MCF 10A (cell line): ENCODE measurements at regions of chr3 and their contacts with region 1.

Region 1: DNA sequence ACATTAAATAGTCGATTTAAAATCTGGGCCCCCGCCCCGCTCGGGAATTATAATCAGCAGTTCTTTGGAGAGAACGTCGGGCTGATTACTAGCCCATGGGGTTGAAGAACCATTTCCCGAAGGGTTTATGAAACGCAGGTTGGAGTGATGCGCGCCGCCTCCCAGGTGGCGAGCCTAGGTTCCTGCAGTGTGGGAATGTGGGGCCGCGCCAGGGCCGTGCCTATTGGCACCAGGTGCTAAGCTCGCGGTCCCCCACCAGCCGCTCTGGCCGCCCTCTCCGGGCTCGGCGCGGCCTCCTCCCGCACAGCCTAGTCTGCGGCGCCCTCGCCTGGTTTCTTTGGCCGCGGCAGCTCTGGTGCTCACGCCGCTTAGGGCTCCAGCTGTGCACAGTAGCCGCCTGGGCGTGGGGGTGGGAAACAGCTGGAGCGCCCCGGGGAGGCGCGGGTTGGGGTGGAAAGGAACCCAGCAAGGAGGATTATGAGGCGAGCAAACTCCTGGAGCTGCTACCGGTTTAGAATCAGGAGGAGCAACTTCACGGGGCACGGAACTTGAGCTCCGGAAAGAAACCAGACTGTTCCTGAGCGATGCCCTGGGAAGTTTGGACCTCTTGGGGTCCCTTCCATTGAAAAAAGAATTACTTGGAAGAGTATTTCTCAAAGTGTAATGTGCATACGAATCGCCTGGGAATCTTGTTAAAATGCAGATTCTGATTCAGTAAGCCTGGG is 5.6 kb upstream of the MECOM start:
- DNase-seq: peak; percentile 72
- H3K4me3 Mint-ChIP-seq: peak overlapping the region; percentile 75
- H3K27ac Mint-ChIP-seq: no peak overlapping the region
- H3K4me1 Mint-ChIP-seq: no peaks in the 10 kb centered on the region
- H3K27me3 Mint-ChIP-seq: peaks cover 29% of the 10 kb centered on the region
- CTCF ChIP-seq: peak; percentile 87

Region 2: GRCh38 chr3:168865022-168865551 is 804.0 kb before region 1 on chr3:
- CTCF ChIA-PET with region 1: interaction called, 6 read pairs
- POLR2A ChIA-PET with region 1: no interaction called
- intact Hi-C with region 1: loop called (anchors 1 kb)
- DNase-seq: peak; percentile 41
- H3K4me3 Mint-ChIP-seq: no peak overlapping the region
- H3K27ac Mint-ChIP-seq: no peak overlapping the region
- H3K4me1 Mint-ChIP-seq: no peaks in the 10 kb centered on the region
- H3K27me3 Mint-ChIP-seq: peaks cover 59% of the 10 kb centered on the region
- CTCF ChIP-seq: peak; percentile 65

Region 3: GRCh38 chr3:169041677-169042171 is 627.4 kb before region 1 on chr3:
- CTCF ChIA-PET with region 1: interaction called, 8 read pairs
- POLR2A ChIA-PET with region 1: no interaction called
- intact Hi-C with region 1: loop called (anchors 1 kb)
- DNase-seq: peak; percentile 46
- H3K4me3 Mint-ChIP-seq: no peak overlapping the region
- H3K27ac Mint-ChIP-seq: peak overlapping the region; percentile 7
- H3K4me1 Mint-ChIP-seq: no peaks in the 10 kb centered on the region
- H3K27me3 Mint-ChIP-seq: no peaks in the 10 kb centered on the region
- CTCF ChIP-seq: peak; percentile 42

Region 4: DNA sequence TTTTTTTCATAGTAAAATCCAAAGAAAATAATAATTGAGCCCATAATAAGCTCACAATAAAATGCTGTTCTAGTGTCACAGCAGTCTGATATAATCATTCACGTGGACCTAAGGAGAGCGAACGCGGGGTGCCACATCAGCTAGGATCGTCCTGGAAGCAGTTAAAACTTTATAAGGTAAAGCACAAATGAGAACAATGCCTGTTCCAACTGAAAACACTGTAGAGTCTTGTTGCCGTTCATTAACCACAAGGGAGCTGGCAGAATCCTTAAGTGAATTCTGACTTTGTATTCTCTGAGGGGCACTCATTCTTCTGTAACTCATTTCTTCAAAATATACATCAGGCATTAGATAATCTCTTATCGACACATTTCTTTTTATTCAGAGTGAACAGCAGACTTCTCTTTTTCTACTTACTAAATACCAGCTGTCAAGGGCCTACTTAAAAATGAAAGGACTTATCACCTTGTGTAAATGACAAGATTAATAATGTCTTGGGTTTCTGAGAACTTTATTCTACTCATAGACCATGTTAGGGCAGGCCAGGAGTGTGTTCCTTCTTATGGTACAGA is 530.2 kb before region 1 on chr3:
- CTCF ChIA-PET with region 1: interaction called, 56 read pairs
- POLR2A ChIA-PET with region 1: no interaction called
- intact Hi-C with region 1: no loop called
- DNase-seq: no peak
- H3K4me3 Mint-ChIP-seq: no peak overlapping the region
- H3K27ac Mint-ChIP-seq: no peak overlapping the region
- H3K4me1 Mint-ChIP-seq: peaks cover 6% of the 10 kb centered on the region
- H3K27me3 Mint-ChIP-seq: no peaks in the 10 kb centered on the region
- CTCF ChIP-seq: no peak

Region 5: DNA sequence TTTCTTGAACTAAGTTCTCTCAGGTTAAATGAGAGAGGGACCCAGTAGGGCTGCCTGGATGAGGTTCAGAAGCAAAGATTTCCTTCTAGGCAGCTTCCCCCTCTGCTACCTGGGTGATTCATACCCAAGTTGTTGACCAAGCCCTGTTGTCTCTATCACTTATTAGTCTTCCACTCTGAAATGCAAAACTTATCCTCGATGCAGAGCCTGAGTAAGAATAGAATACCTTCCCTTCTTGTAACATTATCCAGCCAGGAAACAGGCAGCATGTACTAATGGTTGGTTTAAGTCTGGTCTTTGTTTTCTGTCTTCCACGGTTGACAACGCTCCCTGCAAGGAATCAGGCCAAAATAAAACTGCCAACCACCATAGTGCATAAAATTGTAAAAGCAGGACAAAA is 382.9 kb before region 1 on chr3:
- CTCF ChIA-PET with region 1: interaction called, 11 read pairs
- POLR2A ChIA-PET with region 1: no interaction called
- intact Hi-C with region 1: no loop called
- DNase-seq: no peak
- H3K4me3 Mint-ChIP-seq: no peak overlapping the region
- H3K27ac Mint-ChIP-seq: no peak overlapping the region
- H3K4me1 Mint-ChIP-seq: no peaks in the 10 kb centered on the region
- H3K27me3 Mint-ChIP-seq: no peaks in the 10 kb centered on the region
- CTCF ChIP-seq: no peak

Region 6: GRCh38 chr3:169390271-169391230 is 278.6 kb before region 1 on chr3:
- CTCF ChIA-PET with region 1: interaction called, 15 read pairs
- POLR2A ChIA-PET with region 1: no interaction called
- intact Hi-C with region 1: no loop called
- DNase-seq: peak; percentile 21
- H3K4me3 Mint-ChIP-seq: no peak overlapping the region
- H3K27ac Mint-ChIP-seq: no peak overlapping the region
- H3K4me1 Mint-ChIP-seq: no peaks in the 10 kb centered on the region
- H3K27me3 Mint-ChIP-seq: no peaks in the 10 kb centered on the region
- CTCF ChIP-seq: peak; percentile 9

Region 7: DNA sequence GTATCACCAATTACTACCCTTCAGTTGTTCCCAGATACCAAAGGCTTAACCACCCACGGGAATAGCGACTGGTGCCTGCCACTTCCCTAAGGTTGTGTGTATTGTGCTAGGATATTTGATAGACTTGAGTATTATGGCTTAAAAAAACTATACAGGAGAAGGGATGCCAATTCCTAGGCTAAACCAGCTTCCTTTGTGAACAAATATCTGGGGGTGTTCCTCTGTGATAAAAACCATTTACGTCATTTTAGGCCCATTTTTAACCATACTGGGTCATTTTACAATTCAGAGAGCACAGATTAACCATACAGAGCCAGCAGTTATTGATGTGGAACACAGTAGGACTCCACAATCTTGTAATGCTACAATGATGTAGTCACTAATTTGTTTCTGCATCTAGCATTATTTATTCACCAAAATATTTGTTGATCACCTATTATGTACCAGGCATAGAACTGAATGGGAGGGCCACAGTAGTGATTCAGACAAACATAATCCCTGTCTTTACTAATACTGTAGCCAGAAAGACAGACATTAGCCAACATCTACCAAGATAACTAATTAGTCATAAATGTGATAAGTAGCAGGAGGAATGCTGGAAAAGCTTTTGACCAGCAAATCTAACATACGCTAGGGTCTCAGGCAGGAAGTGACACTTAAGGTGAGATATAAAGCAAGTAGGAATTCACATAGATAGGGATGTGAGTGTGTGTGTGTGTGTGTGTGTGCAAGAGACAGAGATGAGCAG is 190.4 kb before region 1 on chr3:
- CTCF ChIA-PET with region 1: no interaction called
- POLR2A ChIA-PET with region 1: no interaction called
- intact Hi-C with region 1: no loop called
- DNase-seq: no peak
- H3K4me3 Mint-ChIP-seq: no peak overlapping the region
- H3K27ac Mint-ChIP-seq: no peak overlapping the region
- H3K4me1 Mint-ChIP-seq: peaks cover 7% of the 10 kb centered on the region
- H3K27me3 Mint-ChIP-seq: no peaks in the 10 kb centered on the region
- CTCF ChIP-seq: no peak

Region 8: DNA sequence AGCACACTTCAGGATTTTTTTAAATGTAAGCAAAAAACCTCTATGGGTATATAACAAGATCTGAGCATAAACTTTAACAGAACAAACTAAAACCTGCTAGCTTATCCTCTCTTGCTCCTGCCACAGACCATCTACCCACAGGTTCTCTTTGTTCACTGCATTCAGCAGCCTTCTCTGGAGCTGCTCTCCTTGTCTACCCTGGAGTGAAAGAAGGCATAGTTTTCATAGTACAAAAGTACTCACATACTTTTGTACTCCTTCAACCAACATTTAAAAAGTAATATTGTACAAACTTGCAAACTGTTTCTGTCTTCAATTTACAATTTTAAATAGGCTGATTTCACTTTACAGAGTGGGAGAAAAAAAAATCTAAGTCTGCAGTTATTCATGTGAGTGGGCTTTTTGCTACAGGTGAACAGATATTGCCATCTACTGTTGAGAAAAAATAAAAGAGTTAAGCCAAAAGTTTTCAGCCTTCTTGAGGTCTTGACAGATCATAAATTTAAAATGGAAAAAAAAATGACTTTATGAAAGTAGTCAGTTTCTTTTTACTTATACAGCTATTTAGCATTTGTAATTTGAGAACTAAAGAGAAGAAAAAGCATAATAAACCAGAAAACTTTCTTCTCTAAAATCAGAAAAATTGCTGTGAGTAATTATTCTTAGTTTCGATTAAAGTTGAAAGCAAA is 75.4 kb after region 1 on chr3:
- CTCF ChIA-PET with region 1: interaction called, 26 read pairs
- POLR2A ChIA-PET with region 1: no interaction called
- intact Hi-C with region 1: loop called (anchors 10 kb)
- DNase-seq: no peak
- H3K4me3 Mint-ChIP-seq: no peak overlapping the region
- H3K27ac Mint-ChIP-seq: no peak overlapping the region
- H3K4me1 Mint-ChIP-seq: peaks cover 9% of the 10 kb centered on the region
- H3K27me3 Mint-ChIP-seq: no peaks in the 10 kb centered on the region
- CTCF ChIP-seq: peak; percentile 24